ENCODE measurements at regions of chr9 and their contacts with region 1.

Region 1: GRCh38 chr9:92438900-92439526 is 14.7 kb upstream of the OMD start:
- DNase-seq: no peak
- H3K4me3 ChIP-seq: no peak overlapping the region
- H3K27ac ChIP-seq: no peak overlapping the region
- H3K4me1 ChIP-seq: peaks cover 0 to 3% (median 0%) of the 10 kb centered on the region in 4 donors
- H3K27me3 ChIP-seq: no peaks in the 10 kb centered on the region
- CTCF ChIP-seq: peak; percentile 31 to 55 (median 46)
- EP300 ChIP-seq: no peak
- POLR2A ChIP-seq: no peak

Region 2: GRCh38 chr9:92325269-92325990 is 113.6 kb before region 1 on chr9 and contains the starts of genes CENPP and NOL8:
- in situ Hi-C with region 1: loop called in 2 of 4 experiments (anchors 10 to 25 kb)
- intact Hi-C with region 1: no loop called
- DNase-seq: peak; percentile 86
- H3K4me3 ChIP-seq: peak within 1 kb of the TSS; percentile 58 to 91 (median 73)
- H3K27ac ChIP-seq: peak within 1 kb of the TSS; percentile 90 to 95 (median 92)
- H3K4me1 ChIP-seq: peaks cover 11 to 26% (median 16%) of the 10 kb centered on the region in 4 donors
- H3K27me3 ChIP-seq: no peaks in the 10 kb centered on the region
- CTCF ChIP-seq: peak in 1 of 5 experiments; percentile 6
- EP300 ChIP-seq: no peak
- POLR2A ChIP-seq: peak; percentile 35
- total RNA-seq, gene CENPP: 0.37 to 7.1 (median 3.2) TPM
- total RNA-seq, gene NOL8: 17.6 to 86.2 (median 24.3) TPM

Region 3: GRCh38 chr9:92332577-92333281 is 106.3 kb before region 1 on chr9:
- in situ Hi-C with region 1: loop called in 2 of 4 experiments (anchors 10 to 25 kb)
- intact Hi-C with region 1: no loop called
- DNase-seq: no peak
- H3K4me3 ChIP-seq: no peak overlapping the region
- H3K27ac ChIP-seq: no peak overlapping the region
- H3K4me1 ChIP-seq: no peaks in the 10 kb centered on the region
- H3K27me3 ChIP-seq: no peaks in the 10 kb centered on the region
- CTCF ChIP-seq: no peak
- EP300 ChIP-seq: no peak
- POLR2A ChIP-seq: no peak

Region 4: DNA sequence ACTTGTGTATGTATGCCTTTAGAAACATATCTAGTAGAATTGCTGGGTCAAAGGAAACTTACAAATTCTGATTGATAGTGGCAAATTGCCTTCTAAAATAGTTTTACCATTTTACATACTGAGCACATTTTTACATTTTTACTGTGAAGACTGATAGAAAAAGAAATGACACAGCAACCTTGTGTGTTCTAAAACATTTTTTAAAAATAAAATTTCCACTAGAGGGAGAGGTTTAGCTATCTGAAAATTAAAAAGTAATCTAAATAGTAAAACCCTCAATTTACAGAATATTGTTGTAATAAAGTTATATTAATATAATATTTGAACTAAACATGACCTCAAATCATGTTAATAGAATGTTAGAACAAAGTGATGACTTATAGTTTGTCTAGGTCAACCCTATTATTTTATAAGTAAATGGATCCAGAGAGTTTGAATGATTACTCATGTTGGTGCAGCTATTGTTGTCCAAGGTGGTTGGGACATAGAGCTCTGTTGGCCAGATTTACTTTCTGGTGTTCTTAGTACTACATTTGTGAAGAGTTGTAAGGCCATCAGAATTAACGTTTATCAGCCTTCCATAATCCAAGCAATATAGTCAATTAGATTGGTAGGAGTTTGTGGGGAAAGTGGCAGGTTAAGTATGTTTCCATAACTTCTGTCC is 96.1 kb before region 1 on chr9:
- in situ Hi-C with region 1: loop called (anchors 10 to 25 kb)
- intact Hi-C with region 1: loop called (anchors 10 kb)
- DNase-seq: no peak
- H3K4me3 ChIP-seq: no peak overlapping the region
- H3K27ac ChIP-seq: no peak overlapping the region
- H3K4me1 ChIP-seq: peaks cover 0 to 12% (median 0%) of the 10 kb centered on the region in 4 donors
- H3K27me3 ChIP-seq: no peaks in the 10 kb centered on the region
- CTCF ChIP-seq: peak; percentile 23 to 41 (median 32)
- EP300 ChIP-seq: no peak
- POLR2A ChIP-seq: no peak

Region 5: GRCh38 chr9:92764988-92765936 is 326.2 kb after region 1 on chr9:
- in situ Hi-C with region 1: no loop called
- intact Hi-C with region 1: no loop called
- DNase-seq: peak; percentile 99
- H3K4me3 ChIP-seq: peak overlapping the region; percentile 66 to 93 (median 78)
- H3K27ac ChIP-seq: peak overlapping the region; percentile 99 to 100 (median 100)
- H3K4me1 ChIP-seq: peaks cover 22 to 61% (median 36%) of the 10 kb centered on the region in 4 donors
- H3K27me3 ChIP-seq: no peaks in the 10 kb centered on the region
- CTCF ChIP-seq: peak; percentile 93 to 98 (median 97)
- EP300 ChIP-seq: no peak
- POLR2A ChIP-seq: peak; percentile 92